AG04450 (cell line): ENCODE measurements at regions of chr10 and their contacts with region 1.

Region 1: GRCh38 chr10:72048450-72049124 is 39.8 kb downstream of the SPOCK2 start:
- DNase-seq: peak; percentile 83
- H3K4me3 ChIP-seq: no peak overlapping the region
- H3K27ac ChIP-seq: no peak overlapping the region
- H3K27me3 ChIP-seq: peaks cover 4% of the 10 kb centered on the region
- CTCF ChIP-seq: peak; percentile 100

Region 2: DNA sequence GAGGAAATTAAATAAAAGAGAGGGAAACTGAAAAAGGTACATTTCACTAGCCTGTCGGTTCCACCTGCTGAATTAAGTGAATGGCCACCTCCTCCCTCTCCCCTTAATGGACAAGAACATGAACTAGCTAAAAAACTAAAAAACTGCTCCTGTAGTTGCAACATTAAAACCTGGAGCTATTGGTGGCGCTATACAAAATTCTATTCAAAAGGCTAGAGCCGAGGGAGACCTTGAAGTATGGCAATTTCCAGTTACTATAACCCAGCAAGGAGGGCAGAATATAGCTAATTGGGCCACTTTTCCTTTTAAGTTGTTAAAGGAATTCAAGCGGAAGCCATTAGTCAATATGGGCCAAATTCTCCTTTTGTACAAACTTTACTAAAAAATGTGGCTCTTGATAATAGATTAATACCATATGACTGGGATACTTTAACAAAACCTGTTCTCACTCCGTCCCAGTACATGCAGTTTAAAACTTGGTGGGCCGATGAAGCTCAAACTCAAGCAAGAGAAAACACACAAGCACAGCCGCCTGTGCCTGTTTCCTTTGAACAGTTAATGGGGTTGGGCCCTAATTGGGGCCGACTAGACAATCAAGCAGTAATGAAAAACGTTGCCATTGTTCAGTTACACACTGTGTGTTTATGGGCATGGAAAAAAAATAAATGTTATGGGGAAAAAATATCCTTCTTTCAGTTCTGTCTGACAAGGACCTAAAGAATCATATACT is 90.9 kb before region 1 on chr10:
- CTCF ChIA-PET with region 1: interaction called, 75 read pairs
- POLR2A ChIA-PET with region 1: no interaction called
- DNase-seq: no peak
- H3K4me3 ChIP-seq: no peak overlapping the region
- H3K27ac ChIP-seq: no peak overlapping the region
- H3K27me3 ChIP-seq: no peaks in the 10 kb centered on the region
- CTCF ChIP-seq: peak; percentile 19; the same call in 1 of the 2 replicates

Region 3: GRCh38 chr10:71999360-72000072 is 49.1 kb before region 1 on chr10:
- CTCF ChIA-PET with region 1: interaction called, 15 read pairs
- POLR2A ChIA-PET with region 1: no interaction called
- DNase-seq: no peak
- H3K4me3 ChIP-seq: no peak overlapping the region
- H3K27ac ChIP-seq: peak overlapping the region; percentile 82
- H3K27me3 ChIP-seq: no peaks in the 10 kb centered on the region
- CTCF ChIP-seq: no peak

Region 4: GRCh38 chr10:72030762-72031543 is 17.6 kb before region 1 on chr10:
- CTCF ChIA-PET with region 1: interaction called, 20 read pairs
- POLR2A ChIA-PET with region 1: no interaction called
- DNase-seq: no peak
- H3K4me3 ChIP-seq: no peak overlapping the region
- H3K27ac ChIP-seq: no peak overlapping the region
- H3K27me3 ChIP-seq: peaks cover 16% of the 10 kb centered on the region
- CTCF ChIP-seq: no peak

Region 5: GRCh38 chr10:72079356-72079755 is 30.8 kb after region 1 on chr10:
- CTCF ChIA-PET with region 1: interaction called, 10 read pairs
- POLR2A ChIA-PET with region 1: no interaction called
- DNase-seq: no peak
- H3K4me3 ChIP-seq: no peak overlapping the region
- H3K27ac ChIP-seq: no peak overlapping the region
- H3K27me3 ChIP-seq: peaks cover 33% of the 10 kb centered on the region
- CTCF ChIP-seq: no peak

Region 6: DNA sequence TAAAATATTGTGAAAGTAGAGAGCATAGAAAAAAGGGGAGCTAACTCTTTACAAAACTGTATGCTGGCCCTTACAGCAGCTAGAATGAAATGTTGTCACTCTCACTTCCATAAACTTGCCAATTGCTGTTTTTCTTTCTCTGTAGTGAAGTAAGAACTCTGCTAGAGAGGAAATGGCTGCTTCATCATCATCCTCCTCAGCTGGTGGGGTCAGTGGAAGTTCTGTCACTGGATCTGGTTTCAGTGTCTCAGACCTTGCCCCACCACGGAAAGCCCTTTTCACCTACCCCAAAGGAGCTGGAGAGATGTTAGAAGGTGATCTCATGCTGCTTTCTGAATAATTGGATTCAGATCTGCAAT is 175.1 kb after region 1 on chr10:
- CTCF ChIA-PET with region 1: interaction called, 18 read pairs
- POLR2A ChIA-PET with region 1: no interaction called
- DNase-seq: no peak
- H3K4me3 ChIP-seq: no peak overlapping the region
- H3K27ac ChIP-seq: no peak overlapping the region
- H3K27me3 ChIP-seq: no peaks in the 10 kb centered on the region
- CTCF ChIP-seq: no peak

Region 7: DNA sequence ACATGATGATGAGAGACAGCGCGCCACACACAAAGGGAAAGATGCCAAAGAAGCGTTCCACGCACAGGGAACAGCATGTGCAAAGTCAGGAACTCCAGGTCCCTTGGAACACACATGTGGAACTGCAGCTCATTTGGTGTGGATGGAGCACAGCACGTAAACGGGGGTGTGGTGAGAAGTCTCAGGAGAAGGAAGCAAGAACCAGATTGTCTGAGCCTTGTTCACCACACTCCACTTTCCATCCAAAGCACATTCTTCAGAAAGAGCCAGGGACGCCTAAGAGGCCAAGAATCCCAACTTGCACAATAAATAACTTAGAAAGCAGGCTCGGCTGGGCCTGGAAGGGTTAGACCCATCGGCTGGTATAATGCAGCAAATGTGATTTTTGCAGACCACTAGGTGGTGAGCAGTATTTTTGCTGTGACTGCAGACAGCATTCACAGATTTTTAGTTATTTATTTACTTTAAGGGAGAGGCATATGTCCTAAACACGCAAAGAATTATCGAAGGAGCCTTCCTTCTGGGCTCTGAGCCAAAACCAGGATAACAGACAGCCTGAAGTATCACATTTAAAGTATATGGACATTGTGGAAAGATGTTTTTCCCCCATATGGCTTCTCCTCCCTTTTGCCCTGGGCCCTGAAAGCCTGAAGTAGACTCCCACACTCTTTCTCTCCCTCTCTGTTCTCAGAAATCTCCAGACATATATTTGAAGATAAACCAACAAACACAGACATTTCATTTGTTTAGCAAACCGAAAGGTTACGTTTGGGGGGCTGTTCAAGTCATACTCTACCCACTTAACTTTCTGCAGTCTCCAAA is 195.4 kb after region 1 on chr10:
- CTCF ChIA-PET with region 1: no interaction called
- POLR2A ChIA-PET with region 1: no interaction called
- DNase-seq: peak; percentile 80
- H3K4me3 ChIP-seq: no peak overlapping the region
- H3K27ac ChIP-seq: peak overlapping the region; percentile 84
- H3K27me3 ChIP-seq: no peaks in the 10 kb centered on the region
- CTCF ChIP-seq: peak; percentile 62